CD8-positive, alpha-beta memory T cell (primary cell): ENCODE measurements at regions of chr7 and their contacts with region 1.

Region 1: DNA sequence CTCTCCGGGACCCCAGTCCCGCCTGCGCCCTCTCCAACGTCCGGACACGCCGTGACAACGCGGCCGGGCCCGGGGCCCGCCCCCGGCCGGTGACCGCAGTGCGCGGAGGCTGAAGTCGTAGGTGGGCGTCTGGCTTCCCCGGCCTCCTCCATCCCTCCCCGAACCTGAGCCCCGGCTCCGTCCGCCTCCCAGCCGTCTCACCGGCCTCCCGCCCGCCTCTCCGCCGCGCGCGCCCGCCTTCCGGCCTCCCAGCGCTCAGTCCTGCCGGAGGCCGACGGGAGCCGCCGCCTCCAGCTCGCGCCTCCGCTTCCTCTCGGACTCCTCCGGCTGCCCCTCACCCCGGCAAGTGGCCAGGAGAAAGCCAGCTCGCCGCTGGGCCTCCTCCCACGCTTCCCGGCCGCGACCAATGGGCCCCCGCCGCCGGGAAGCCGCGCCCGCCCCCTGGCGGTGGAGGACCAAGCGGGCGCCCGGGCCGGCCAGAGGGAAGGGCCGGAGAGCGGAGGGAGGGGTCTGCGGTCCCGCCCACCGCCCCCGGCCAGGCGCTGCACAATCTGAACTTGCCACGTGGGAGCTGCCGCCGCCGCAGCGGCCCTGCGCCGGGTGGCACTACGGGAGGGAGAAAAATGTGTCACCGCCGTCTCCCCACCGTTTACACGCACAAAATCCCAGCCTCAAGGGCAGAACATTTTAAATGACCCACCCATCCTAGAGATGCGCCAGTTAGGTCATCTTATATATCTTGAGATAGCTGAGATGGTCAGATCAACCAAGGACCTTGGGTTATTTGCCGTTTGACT is at the start of gene FAM3C:
- DNase-seq: peak; percentile 69 to 80 (median 79)
- H3K4me3 ChIP-seq: peak within 1 kb of the TSS; percentile 70
- H3K4me3 Mint-ChIP-seq: peak within 1 kb of the TSS; percentile 84 to 94 (median 88)
- H3K27ac ChIP-seq: peak within 1 kb of the TSS; percentile 69
- H3K27ac Mint-ChIP-seq: peak within 1 kb of the TSS; percentile 76 to 95 (median 90)
- H3K4me1 ChIP-seq: peaks cover 15% of the 10 kb centered on the region
- H3K4me1 Mint-ChIP-seq: peaks cover 32 to 46% (median 35%) of the 10 kb centered on the region in 3 donors
- H3K27me3 ChIP-seq: no peaks in the 10 kb centered on the region
- H3K27me3 Mint-ChIP-seq: no peaks in the 10 kb centered on the region
- total RNA-seq, gene FAM3C: 47.3 to 51.2 TPM

Region 2: GRCh38 chr7:121366852-121367431 is 29.2 kb before region 1 on chr7:
- CTCF ChIA-PET with region 1: interaction called, 31 read pairs
- POLR2A ChIA-PET with region 1: interaction called, 12 read pairs
- DNase-seq: peak in 3 of 5 donors; percentile 8 to 47 (median 43)
- H3K4me3 ChIP-seq: no peak overlapping the region
- H3K4me3 Mint-ChIP-seq: no peak overlapping the region
- H3K27ac ChIP-seq: no peak overlapping the region
- H3K27ac Mint-ChIP-seq: no peak overlapping the region
- H3K4me1 ChIP-seq: no peaks in the 10 kb centered on the region
- H3K4me1 Mint-ChIP-seq: peaks cover 20 to 43% (median 34%) of the 10 kb centered on the region in 3 donors
- H3K27me3 ChIP-seq: no peaks in the 10 kb centered on the region
- H3K27me3 Mint-ChIP-seq: no peaks in the 10 kb centered on the region

Region 3: DNA sequence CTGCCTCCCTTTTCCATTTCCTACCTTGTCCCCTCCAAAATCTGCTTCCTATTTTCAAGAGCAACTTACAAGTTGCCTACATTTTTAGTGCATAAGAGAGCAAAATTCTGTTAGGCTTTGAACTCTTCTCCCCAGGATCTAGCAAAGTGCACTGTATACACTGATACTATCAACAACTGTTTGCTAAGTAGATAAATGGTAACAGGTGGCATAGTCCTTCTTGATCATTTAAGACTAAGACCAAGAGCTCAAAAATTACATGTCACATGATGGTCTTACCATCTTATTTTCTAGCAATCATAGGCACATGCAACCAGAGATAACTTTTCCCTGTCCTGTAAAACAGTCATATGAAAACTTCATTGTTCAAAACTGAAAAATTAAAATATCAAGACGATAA is 16.2 kb before region 1 on chr7:
- CTCF ChIA-PET with region 1: interaction called, 41 read pairs
- POLR2A ChIA-PET with region 1: interaction called, 11 read pairs
- DNase-seq: no peak
- H3K4me3 ChIP-seq: no peak overlapping the region
- H3K4me3 Mint-ChIP-seq: no peak overlapping the region
- H3K27ac ChIP-seq: no peak overlapping the region
- H3K27ac Mint-ChIP-seq: peak overlapping the region in 2 of 8 donors; percentile 26 to 59
- H3K4me1 ChIP-seq: peaks cover 16% of the 10 kb centered on the region
- H3K4me1 Mint-ChIP-seq: peaks cover 25 to 64% (median 41%) of the 10 kb centered on the region in 3 donors
- H3K27me3 ChIP-seq: no peaks in the 10 kb centered on the region
- H3K27me3 Mint-ChIP-seq: no peaks in the 10 kb centered on the region

Region 4: DNA sequence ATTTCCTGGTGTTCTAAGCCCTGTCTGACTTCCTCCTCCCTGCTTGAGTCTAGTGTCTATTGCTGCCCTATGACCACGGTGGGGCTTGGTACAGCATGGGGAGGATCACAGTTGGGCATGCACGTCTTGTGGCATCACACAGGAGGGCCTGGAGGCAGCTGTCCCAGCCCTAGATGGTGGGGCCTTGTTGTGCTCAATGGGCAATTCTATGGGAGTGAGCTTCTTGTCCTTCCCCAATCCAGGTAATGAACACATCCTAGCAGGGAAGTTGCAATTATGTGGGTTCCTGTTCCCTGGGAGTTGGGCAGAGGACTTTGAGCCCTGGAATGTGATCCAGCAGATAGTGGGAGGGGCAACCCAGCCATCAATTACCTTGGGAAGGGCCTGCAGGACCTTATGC is 10.8 kb after region 1 on chr7:
- CTCF ChIA-PET with region 1: interaction called, 10 read pairs
- POLR2A ChIA-PET with region 1: interaction called, 3 read pairs
- DNase-seq: no peak
- H3K4me3 ChIP-seq: no peak overlapping the region
- H3K4me3 Mint-ChIP-seq: no peak overlapping the region
- H3K27ac ChIP-seq: no peak overlapping the region
- H3K27ac Mint-ChIP-seq: peak overlapping the region in 1 of 8 donors; percentile 64
- H3K4me1 ChIP-seq: no peaks in the 10 kb centered on the region
- H3K4me1 Mint-ChIP-seq: peaks cover 3 to 6% (median 5%) of the 10 kb centered on the region in 3 donors
- H3K27me3 ChIP-seq: no peaks in the 10 kb centered on the region
- H3K27me3 Mint-ChIP-seq: peaks cover 0 to 13% of the 10 kb centered on the region in 2 donors

Region 5: GRCh38 chr7:121547544-121548092 is 151.5 kb after region 1 on chr7:
- CTCF ChIA-PET with region 1: interaction called, 12 read pairs
- POLR2A ChIA-PET with region 1: no interaction called
- DNase-seq: peak in 2 of 5 donors; percentile 36 to 40
- H3K4me3 ChIP-seq: no peak overlapping the region
- H3K4me3 Mint-ChIP-seq: no peak overlapping the region
- H3K27ac ChIP-seq: no peak overlapping the region
- H3K27ac Mint-ChIP-seq: no peak overlapping the region
- H3K4me1 ChIP-seq: no peaks in the 10 kb centered on the region
- H3K4me1 Mint-ChIP-seq: peaks cover 10 to 26% (median 13%) of the 10 kb centered on the region in 3 donors
- H3K27me3 ChIP-seq: no peaks in the 10 kb centered on the region
- H3K27me3 Mint-ChIP-seq: peaks cover 2 to 3% of the 10 kb centered on the region in 2 donors